H1 (cell line): ENCODE measurements at regions of chr15 and their contacts with region 1.

Region 1: GRCh38 chr15:75809986-75810750 is 33.1 kb upstream of the UBE2Q2 start:
- DNase-seq: peak; percentile 33 to 72
- H3K4me3 ChIP-seq: no peak overlapping the region
- H3K27ac ChIP-seq: no peak overlapping the region
- H3K4me1 ChIP-seq: peaks cover 0 to 5% (median 0%) of the 10 kb centered on the region in 4 experiments; a peak in 1 of 7 replicates
- H3K27me3 ChIP-seq: no peaks in the 10 kb centered on the region
- CTCF ChIP-seq: peak; percentile 71 to 92 (median 76)
- EP300 ChIP-seq: no peak
- POLR2A ChIP-seq: no peak
- RAD21 ChIP-seq: peak; percentile 89 to 91

Region 2: DNA sequence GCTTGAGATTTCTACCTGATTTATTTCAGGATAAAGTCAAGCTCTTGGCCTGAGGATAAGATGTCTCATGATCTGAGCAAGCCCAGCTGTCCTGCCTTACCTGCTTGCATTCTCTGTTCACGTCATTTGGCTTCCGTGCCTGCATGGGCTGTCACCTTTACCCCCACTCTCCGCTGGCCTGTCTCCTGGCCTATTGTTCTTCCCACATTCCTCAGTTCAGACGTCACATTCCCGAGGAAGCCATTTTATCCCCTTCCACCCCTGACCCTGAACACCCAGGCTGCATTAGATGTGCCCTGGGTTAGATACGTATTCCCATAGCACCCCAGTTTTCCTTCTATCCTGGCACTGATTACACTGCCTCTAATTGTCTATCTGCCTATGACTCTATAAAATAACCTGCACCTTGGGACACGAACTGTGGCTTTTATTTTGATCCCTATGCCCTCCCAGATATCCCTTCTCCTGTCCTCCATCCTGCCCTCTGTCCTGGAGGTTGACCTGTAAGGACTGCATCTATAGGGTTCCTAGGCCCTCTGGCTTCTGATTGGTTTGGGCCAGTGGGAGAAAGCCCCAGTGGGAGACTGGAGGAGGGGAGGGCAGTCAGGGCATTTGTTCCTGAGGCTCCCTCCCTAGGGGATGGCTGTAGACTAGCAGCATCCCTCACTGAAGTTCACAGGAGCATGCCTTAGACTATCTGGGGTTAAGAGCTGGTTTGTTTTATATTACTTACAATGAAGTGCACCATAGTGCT is 13.9 kb after region 1 on chr15:
- CTCF ChIA-PET with region 1: interaction called, 13 read pairs
- POLR2A ChIA-PET with region 1: interaction called, 3 read pairs
- DNase-seq: peak in 1 of 2 experiments; percentile 69
- H3K4me3 ChIP-seq: peak overlapping the region in 1 of 4 experiments; percentile 24; a peak in 1 of 8 replicates
- H3K27ac ChIP-seq: peak overlapping the region; percentile 76
- H3K4me1 ChIP-seq: peaks cover 5 to 14% (median 7%) of the 10 kb centered on the region in 4 experiments
- H3K27me3 ChIP-seq: no peaks in the 10 kb centered on the region
- CTCF ChIP-seq: no peak
- EP300 ChIP-seq: peak in 1 of 2 experiments; percentile 55; a peak in 1 of 3 replicates
- POLR2A ChIP-seq: peak; percentile 18 to 49; a peak in 2 of 3 replicates
- RAD21 ChIP-seq: no peak; a peak in 1 of 4 replicates

Region 3: DNA sequence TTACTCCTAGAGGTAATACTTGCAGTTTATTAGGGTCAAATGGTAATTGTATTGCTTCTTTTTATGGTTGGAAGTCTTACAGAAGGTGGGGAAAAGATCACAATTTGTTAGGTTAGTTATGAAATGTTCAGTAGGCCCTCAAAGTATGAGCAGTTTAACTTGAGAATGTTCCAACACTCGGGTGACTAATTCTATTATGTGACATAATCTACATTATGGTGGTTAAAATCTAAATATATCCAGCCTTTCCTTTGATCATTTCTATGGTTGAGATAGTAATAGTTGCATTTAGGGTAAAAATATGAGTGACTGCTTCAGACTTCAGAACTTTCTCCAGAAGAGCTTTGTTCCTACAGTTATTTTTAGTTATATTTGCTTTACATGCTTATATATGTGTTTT is 73.9 kb after region 1 on chr15:
- CTCF ChIA-PET with region 1: interaction called, 19 read pairs
- POLR2A ChIA-PET with region 1: no interaction called
- DNase-seq: no peak
- H3K4me3 ChIP-seq: no peak overlapping the region
- H3K27ac ChIP-seq: no peak overlapping the region
- H3K4me1 ChIP-seq: no peaks in the 10 kb centered on the region
- H3K27me3 ChIP-seq: no peaks in the 10 kb centered on the region
- CTCF ChIP-seq: no peak
- EP300 ChIP-seq: no peak
- POLR2A ChIP-seq: no peak
- RAD21 ChIP-seq: no peak

Region 4: GRCh38 chr15:75921729-75922703 is 111.8 kb after region 1 on chr15:
- CTCF ChIA-PET with region 1: interaction called, 110 read pairs
- POLR2A ChIA-PET with region 1: interaction called, 4 read pairs
- DNase-seq: no peak
- H3K4me3 ChIP-seq: no peak overlapping the region
- H3K27ac ChIP-seq: no peak overlapping the region
- H3K4me1 ChIP-seq: peaks cover 0 to 8% (median 1%) of the 10 kb centered on the region in 4 experiments; a peak in 1 of 7 replicates
- H3K27me3 ChIP-seq: no peaks in the 10 kb centered on the region
- CTCF ChIP-seq: peak in 2 of 3 experiments; percentile 56 to 60; a peak in 3 of 4 replicates
- EP300 ChIP-seq: no peak
- POLR2A ChIP-seq: no peak
- RAD21 ChIP-seq: peak; percentile 80 to 84